Mammary epithelial cell (primary cell): ENCODE measurements at regions of chr9 and their contacts with region 1.

Region 1: GRCh38 chr9:136482793-136483588 is at the start of gene SEC16A:
- DNase-seq: peak; percentile 93
- H3K4me3 ChIP-seq: peak within 1 kb of the TSS; percentile 76 to 91 (median 79)
- H3K27ac ChIP-seq: peak within 1 kb of the TSS; percentile 97
- H3K4me1 ChIP-seq: peaks cover 26% of the 10 kb centered on the region
- H3K27me3 ChIP-seq: no peaks in the 10 kb centered on the region
- CTCF ChIP-seq: no peak
- total RNA-seq, gene SEC16A: 66.0 to 106 TPM

Region 2: GRCh38 chr9:136363606-136364370 is 119.2 kb before region 1 on chr9 and contains the start of gene DNLZ:
- CTCF ChIA-PET with region 1: no interaction called
- dilution Hi-C with region 1: no loop called
- in situ Hi-C with region 1: no loop called
- intact Hi-C with region 1: loop called (anchors 1 kb)
- DNase-seq: peak; percentile 73
- H3K4me3 ChIP-seq: peak within 1 kb of the TSS; percentile 58 to 93 (median 72)
- H3K27ac ChIP-seq: no peak within 1 kb of the TSS
- H3K4me1 ChIP-seq: peaks cover 35% of the 10 kb centered on the region
- H3K27me3 ChIP-seq: no peaks in the 10 kb centered on the region
- CTCF ChIP-seq: peak; percentile 73 to 87
- total RNA-seq, gene DNLZ: 11.7 to 33.9 TPM

Region 3: DNA sequence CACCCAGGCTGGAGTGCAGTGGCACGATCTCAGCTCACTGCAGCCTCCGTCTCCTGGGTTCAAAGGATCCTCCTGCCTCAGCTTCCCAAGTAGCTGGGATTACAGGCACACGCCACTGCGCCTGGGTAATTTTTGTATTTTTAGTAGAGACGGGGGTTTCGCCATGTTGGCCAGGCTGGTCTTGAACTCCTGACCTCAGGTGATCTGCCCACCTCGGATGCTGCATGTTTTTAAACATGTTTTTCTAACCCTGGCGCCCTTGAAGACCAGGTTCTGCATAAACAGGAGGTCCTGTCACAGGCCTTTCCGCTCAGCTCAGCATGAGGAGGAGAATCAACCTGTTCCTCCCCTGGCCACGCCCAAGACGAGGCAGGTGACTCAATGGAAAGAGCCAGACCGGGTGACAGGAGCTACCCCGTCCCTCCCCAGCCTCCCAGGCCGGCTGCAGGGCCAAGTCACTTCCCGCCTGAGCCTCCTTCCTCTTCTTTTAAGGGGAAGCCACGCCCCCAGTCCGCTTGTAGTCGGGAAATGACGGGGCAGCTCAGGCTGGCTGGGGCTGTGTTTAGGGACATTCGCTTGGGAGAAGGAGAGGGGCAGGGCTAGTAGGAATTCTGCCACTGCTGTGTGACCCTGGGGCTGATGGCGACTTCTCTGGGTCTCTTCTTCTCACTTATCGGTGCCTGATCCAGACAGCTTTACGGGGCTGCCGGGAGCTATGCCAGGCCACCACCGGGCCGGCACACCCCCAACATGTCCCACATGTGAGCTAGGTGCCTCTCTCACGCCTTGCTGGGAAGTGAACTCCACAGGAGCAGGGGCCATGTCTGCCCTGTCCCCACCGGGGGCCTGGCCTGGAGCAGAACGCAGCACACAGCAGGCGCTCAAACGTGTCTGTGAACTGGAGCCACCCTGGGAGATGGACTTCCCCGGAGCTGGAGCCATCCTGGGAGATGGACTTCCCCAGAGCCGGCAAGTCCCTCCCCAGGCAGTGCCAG is 56.7 kb after region 1 on chr9:
- CTCF ChIA-PET with region 1: no interaction called
- dilution Hi-C with region 1: loop called (anchors 5 kb)
- in situ Hi-C with region 1: no loop called
- intact Hi-C with region 1: no loop called
- DNase-seq: no peak
- H3K4me3 ChIP-seq: no peak overlapping the region
- H3K27ac ChIP-seq: no peak overlapping the region
- H3K4me1 ChIP-seq: peaks cover 46% of the 10 kb centered on the region
- H3K27me3 ChIP-seq: no peaks in the 10 kb centered on the region
- CTCF ChIP-seq: no peak

Region 4: GRCh38 chr9:136625101-136626060 is 142.4 kb after region 1 on chr9:
- CTCF ChIA-PET with region 1: interaction called, 12 read pairs
- dilution Hi-C with region 1: no loop called
- in situ Hi-C with region 1: loop called in 1 of 2 experiments (anchors 5 kb)
- intact Hi-C with region 1: loop called (anchors 1 kb)
- DNase-seq: peak; percentile 58
- H3K4me3 ChIP-seq: no peak overlapping the region
- H3K27ac ChIP-seq: no peak overlapping the region
- H3K4me1 ChIP-seq: peaks cover 54% of the 10 kb centered on the region
- H3K27me3 ChIP-seq: no peaks in the 10 kb centered on the region
- CTCF ChIP-seq: peak; percentile 18 to 67

Region 5: GRCh38 chr9:136694236-136694942 is 211.4 kb after region 1 on chr9:
- CTCF ChIA-PET with region 1: no interaction called
- dilution Hi-C with region 1: no loop called
- in situ Hi-C with region 1: no loop called
- intact Hi-C with region 1: loop called (anchors 2 kb)
- DNase-seq: peak; percentile 37
- H3K4me3 ChIP-seq: peak overlapping the region in 1 of 3 experiments; percentile 0
- H3K27ac ChIP-seq: peak overlapping the region; percentile 9
- H3K4me1 ChIP-seq: peaks cover 41% of the 10 kb centered on the region
- H3K27me3 ChIP-seq: no peaks in the 10 kb centered on the region
- CTCF ChIP-seq: peak; percentile 49 to 86

Region 6: GRCh38 chr9:136728080-136728547 is 245.1 kb after region 1 on chr9:
- CTCF ChIA-PET with region 1: no interaction called
- dilution Hi-C with region 1: no loop called
- in situ Hi-C with region 1: no loop called
- intact Hi-C with region 1: no loop called
- DNase-seq: peak; percentile 80
- H3K4me3 ChIP-seq: peak overlapping the region; percentile 71 to 88 (median 87)
- H3K27ac ChIP-seq: peak overlapping the region; percentile 55
- H3K4me1 ChIP-seq: peaks cover 21% of the 10 kb centered on the region
- H3K27me3 ChIP-seq: no peaks in the 10 kb centered on the region
- CTCF ChIP-seq: peak in 1 of 2 donors; percentile 80

Region 7: DNA sequence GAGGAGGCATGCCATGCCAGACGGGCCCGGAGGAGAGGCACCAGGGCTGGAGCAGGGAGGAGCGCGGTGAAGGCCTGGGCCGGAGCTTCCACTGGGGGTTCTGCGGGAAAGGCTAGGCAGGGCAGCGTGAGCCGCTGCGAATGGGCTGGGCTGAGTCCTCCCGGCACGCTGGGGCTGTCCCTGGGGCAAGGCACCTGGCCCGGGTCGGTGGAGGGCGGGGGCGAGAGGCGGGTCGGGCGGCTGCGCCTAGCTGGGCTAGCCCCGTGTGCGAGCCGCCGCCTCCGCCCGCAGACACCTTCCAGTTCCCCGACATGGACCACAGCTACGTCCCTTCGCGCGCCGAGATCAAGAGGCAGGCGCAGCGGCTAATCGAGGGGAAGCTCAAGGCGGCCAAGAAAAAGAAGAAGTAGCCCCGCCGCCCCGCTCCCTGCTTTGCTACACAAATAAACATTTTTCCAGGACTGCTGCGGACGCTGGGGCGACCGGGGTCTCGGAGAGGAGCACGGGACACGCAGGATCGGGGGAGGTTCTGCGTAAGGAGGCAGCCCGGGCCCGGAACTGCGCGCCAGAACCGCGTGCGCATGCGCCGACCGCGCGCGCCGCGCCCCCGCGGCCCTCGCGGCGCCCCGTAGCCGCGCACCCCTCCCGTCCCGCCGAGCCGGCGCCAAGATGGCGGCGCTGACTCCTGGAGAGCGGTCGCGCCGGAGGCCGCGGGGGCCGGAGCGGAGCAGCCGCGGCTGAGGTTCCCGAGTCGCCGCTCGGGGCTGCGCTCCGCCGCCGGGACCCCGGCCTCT is 324.5 kb after region 1 on chr9 and contains the start of gene RABL6:
- CTCF ChIA-PET with region 1: no interaction called
- dilution Hi-C with region 1: loop called (anchors 5 kb)
- in situ Hi-C with region 1: no loop called
- intact Hi-C with region 1: no loop called
- DNase-seq: peak; percentile 66
- H3K4me3 ChIP-seq: peak within 1 kb of the TSS; percentile 74 to 93 (median 87)
- H3K27ac ChIP-seq: peak within 1 kb of the TSS; percentile 39
- H3K4me1 ChIP-seq: peaks cover 24% of the 10 kb centered on the region
- H3K27me3 ChIP-seq: no peaks in the 10 kb centered on the region
- CTCF ChIP-seq: no peak
- total RNA-seq, gene RABL6: 53.8 to 84.3 TPM